PC-3 (cell line): ENCODE measurements at regions of chr3 and their contacts with region 1.

Region 1: DNA sequence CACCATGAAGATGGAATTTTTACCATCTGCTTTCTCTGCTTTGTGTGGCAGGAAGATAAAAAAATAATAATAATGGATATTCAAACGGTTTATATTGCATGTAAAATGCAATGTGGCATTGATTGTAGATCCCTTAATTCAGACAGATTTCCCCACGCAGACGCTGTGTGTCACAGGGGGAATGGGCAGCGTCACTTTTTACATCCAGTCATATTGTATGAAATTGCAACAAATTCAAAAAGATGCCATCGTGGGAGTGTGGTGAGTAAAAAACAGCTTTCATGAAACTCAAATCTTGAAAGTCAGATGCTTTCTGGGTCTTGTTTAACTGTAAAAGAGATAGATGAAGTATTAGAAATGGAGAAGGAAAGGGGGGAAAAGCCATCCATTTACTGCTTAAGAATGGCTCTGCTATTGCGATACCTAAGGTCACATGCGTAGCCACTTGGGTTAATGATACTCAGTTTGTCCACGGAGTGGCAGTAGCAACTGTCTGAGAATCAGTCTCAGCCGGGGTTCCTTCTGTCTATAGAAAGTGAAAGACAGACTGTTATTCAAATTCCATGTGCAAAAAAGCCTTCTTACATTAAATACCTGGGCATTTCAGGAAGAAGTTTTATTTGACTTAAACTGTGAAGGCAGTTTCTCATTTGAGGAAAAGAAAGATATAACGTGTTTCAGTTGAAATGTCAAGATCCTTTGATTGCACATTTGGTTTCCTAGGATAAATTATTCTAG is 28.5 kb downstream of the BTD start:
- DNase-seq: peak; percentile 92
- ATAC-seq: peak; percentile 68
- H3K4me3 ChIP-seq: peak overlapping the region; percentile 55
- H3K27ac ChIP-seq: peak overlapping the region; percentile 89
- H3K4me1 ChIP-seq: peaks cover 50% of the 10 kb centered on the region
- H3K27me3 ChIP-seq: no peaks in the 10 kb centered on the region
- CTCF ChIP-seq: peak; percentile 95

Region 2: DNA sequence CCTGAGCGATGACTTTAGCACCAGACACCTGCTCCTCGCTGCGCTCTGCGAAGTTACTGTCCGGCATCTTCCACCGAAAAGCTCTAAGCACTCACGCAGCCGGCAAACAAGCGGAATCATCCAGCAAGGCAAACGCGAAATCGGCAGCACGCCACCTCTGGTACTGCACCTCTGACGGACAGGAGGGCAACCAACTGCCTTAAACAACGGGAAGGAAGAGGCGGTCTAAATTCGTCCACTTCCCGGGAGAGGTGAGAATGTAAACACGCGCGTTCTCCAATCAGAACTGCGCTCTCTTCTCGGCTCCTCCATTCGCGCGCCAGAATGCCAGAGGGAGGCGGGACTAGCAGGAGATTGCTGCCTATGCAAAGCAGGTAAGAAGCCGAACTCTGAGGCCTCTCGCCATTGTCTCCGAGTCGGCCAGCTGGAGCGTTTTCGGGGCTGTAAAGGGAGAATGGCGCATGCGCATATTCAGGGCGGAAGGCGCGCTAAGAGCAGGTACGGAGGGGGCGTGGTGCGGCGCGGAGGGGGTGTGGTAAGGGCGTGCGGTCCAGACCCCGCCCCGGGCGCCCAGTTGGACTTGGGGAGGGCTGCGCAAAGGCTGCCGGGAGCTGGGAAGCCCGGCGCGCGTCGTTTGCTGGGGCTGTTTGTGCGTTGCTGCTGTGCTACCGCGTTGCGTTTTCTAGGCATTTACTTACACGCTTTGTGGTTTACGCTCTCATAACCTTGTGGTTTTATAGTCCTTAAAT is 28.5 kb before region 1 on chr3 and contains the starts of genes BTD and HACL1:
- CTCF ChIA-PET with region 1: no interaction called
- POLR2A ChIA-PET with region 1: no interaction called
- intact Hi-C with region 1: no loop called
- DNase-seq: peak; percentile 99
- ATAC-seq: peak; percentile 94
- H3K4me3 ChIP-seq: peak within 1 kb of the TSS; percentile 88
- H3K27ac ChIP-seq: peak within 1 kb of the TSS; percentile 53
- H3K4me1 ChIP-seq: peaks cover 21% of the 10 kb centered on the region; the same call in 1 of the 2 replicates
- H3K27me3 ChIP-seq: no peaks in the 10 kb centered on the region
- CTCF ChIP-seq: peak; percentile 28
- total RNA-seq, gene BTD: 11.7 and 17.1 TPM in 2 replicates
- total RNA-seq, gene HACL1: 20.3 and 25.5 TPM in 2 replicates

Region 3: GRCh38 chr3:15647611-15648167 is 17.7 kb after region 1 on chr3:
- CTCF ChIA-PET with region 1: interaction called, 4 read pairs
- POLR2A ChIA-PET with region 1: interaction called, 8 read pairs
- intact Hi-C with region 1: loop called (anchors 2 kb)
- DNase-seq: peak; percentile 90
- ATAC-seq: peak; percentile 39
- H3K4me3 ChIP-seq: peak overlapping the region; percentile 51
- H3K27ac ChIP-seq: peak overlapping the region; percentile 98
- H3K4me1 ChIP-seq: peaks cover 42% of the 10 kb centered on the region
- H3K27me3 ChIP-seq: no peaks in the 10 kb centered on the region
- CTCF ChIP-seq: no peak

Region 4: DNA sequence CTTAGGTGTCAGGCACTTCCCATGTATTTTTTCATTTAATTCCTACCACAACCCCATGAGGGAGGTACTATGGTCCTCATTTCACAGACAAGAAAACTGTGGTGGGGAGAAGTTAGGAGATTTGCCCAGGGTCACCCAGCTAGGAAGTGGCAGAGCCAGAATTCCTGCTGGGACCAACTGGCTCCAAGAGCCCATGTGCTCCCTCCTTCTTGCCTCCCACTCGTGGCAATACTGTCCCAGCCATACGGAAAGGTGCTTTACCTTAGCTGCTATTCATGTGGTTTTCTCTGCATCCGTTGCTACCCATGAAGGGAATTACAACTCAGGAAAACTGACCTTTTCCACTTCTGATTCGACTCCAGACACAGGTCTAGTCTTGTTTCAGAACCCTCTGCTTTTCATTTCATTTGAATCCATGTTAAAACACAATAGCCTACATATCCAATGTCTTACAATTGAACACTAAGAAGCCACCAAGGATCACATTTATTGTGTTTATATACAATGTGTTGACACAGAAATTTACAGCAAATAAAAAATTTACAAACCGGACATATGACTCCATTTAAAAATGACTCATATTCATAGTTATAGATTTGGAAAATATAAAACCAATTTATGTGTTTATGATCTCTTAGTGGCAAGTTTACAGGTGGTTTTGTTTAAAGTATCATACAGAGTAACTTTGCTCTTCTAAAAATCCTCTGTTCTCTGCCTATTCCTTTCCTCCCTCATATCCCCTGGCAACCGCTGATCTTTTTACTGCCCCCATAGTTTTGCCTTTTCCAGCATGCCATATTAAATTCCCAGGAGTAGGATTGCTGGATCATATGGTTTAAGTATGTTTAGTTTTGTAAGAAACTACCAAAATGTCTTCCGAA is 30.3 kb after region 1 on chr3:
- CTCF ChIA-PET with region 1: no interaction called
- POLR2A ChIA-PET with region 1: interaction called, 3 read pairs
- intact Hi-C with region 1: loop called (anchors 1 kb)
- DNase-seq: peak; percentile 75
- ATAC-seq: peak; percentile 85
- H3K4me3 ChIP-seq: no peak overlapping the region
- H3K27ac ChIP-seq: peak overlapping the region; percentile 80
- H3K4me1 ChIP-seq: peaks cover 18% of the 10 kb centered on the region
- H3K27me3 ChIP-seq: no peaks in the 10 kb centered on the region
- CTCF ChIP-seq: no peak

Region 5: DNA sequence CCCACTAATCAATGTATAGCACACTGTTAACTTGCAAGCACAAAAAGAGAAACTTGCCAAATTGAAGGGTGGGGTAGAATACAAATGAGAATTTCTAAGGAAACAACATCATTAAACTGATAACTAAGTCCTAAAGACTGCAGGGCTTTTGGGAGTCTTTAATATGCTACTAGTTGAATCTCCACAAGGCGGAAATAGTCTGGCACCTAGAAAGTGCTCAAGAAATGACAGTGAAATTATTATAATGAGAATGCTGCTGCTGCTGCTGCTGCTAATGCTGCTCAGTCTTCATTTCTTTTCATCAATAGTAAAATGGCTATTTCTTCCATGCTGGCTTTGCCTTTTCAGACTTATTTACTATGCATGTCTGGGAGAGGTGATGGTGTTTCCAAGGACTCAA is 63.3 kb after region 1 on chr3:
- CTCF ChIA-PET with region 1: no interaction called
- POLR2A ChIA-PET with region 1: interaction called, 3 read pairs
- intact Hi-C with region 1: loop called (anchors 1 kb)
- DNase-seq: peak; percentile 46
- ATAC-seq: peak; percentile 74
- H3K4me3 ChIP-seq: no peak overlapping the region
- H3K27ac ChIP-seq: no peak overlapping the region
- H3K4me1 ChIP-seq: no peaks in the 10 kb centered on the region
- H3K27me3 ChIP-seq: no peaks in the 10 kb centered on the region
- CTCF ChIP-seq: peak; percentile 48

Region 6: DNA sequence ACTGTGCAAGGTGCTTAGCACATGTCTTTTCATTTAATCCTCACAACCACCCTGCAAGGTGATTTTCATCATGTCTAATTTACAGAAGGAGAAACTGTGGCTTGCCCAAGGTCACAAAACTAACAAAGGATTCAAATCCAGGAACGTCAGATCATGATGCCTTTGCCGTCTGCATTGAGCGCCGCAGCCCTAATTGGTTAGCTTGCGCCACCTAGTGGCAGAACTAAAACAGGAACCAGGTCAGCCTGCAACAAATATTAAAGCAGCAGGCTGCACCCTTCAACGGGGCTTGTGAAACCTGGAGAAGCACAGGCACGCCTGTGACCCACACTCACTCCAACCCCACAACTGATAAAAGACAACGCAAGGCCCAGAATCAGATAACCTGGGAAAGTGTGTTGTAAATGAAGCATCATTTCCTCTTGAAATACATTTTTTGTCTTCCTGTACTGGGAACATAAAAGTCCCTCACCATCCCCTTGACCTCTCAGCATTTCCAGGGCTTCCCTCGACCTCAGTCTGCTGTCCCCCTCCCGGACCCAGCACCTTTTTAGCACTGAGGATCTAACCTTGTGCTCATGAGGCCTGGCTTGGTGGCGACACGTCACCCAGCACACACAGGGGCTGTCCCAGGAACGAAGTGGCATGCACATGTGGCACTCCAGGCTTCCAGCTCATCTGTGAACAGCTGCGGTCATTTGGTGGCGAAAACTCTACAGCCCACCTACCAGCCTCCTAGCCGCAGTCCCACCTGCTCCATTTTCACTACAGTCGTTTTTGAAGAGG is 617.4 kb after region 1 on chr3:
- CTCF ChIA-PET with region 1: no interaction called
- POLR2A ChIA-PET with region 1: no interaction called
- intact Hi-C with region 1: loop called (anchors 10 kb)
- DNase-seq: peak; percentile 93
- ATAC-seq: peak; percentile 87
- H3K4me3 ChIP-seq: peak overlapping the region; percentile 33; the same call in 1 of the 2 replicates
- H3K27ac ChIP-seq: no peak overlapping the region
- H3K4me1 ChIP-seq: peaks cover 25% of the 10 kb centered on the region
- H3K27me3 ChIP-seq: no peaks in the 10 kb centered on the region
- CTCF ChIP-seq: peak; percentile 98